CD4-positive, alpha-beta memory T cell (primary cell): ENCODE measurements at regions of chr17 and their contacts with region 1.

Region 1: GRCh38 chr17:80761110-80761871 is 216.7 kb downstream of the RPTOR start:
- DNase-seq: peak; percentile 45 to 87 (median 53)
- H3K4me3 ChIP-seq: peak overlapping the region in 1 of 2 donors; percentile 27
- H3K4me3 Mint-ChIP-seq: peak overlapping the region; percentile 73 to 87 (median 80)
- H3K27ac ChIP-seq: peak overlapping the region; percentile 49
- H3K27ac Mint-ChIP-seq: peak overlapping the region; percentile 89 to 96 (median 94)
- H3K4me1 ChIP-seq: peaks cover 72% of the 10 kb centered on the region
- H3K4me1 Mint-ChIP-seq: peaks cover 59 to 86% (median 73%) of the 10 kb centered on the region in 4 donors
- H3K27me3 ChIP-seq: no peaks in the 10 kb centered on the region
- H3K27me3 Mint-ChIP-seq: no peaks in the 10 kb centered on the region

Region 2: DNA sequence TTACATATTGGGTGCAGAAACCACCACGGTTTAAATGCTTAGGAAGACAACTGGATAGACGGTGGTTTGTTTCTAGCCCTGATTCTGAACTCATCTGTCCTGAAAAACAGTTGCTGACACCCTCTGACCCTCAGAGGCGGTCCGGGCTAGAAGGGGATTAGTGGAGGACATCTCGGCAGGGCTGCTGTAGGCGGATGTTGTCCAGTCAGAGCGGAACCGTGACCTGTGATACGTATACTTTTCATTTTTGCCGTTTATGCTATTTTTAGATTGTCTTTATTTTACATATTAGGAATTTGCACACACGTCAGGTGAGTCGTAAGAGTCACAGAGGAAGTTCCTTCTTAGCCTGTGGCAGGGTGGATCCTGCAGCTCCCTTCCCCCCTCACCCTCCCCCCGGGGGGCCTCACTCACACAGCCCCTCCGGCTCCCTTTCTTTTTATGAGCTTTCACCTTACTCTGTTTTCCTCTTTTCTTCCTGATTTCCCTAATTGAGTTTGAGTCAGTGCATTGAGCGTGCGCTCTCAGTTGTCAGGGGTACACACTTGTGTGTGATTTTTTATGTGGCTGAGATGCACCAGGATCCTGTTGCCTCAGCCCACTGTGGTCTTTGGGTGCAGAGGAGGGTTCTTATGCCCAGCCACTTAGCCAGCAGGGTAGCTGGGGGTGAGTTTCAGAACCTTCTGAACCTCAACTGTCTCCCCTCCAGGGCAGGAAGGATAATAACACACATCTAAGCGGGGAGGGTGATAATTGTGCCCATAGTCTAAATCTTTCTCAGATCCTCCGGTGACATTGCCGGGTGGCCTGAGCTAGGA is 19.3 kb after region 1 on chr17:
- CTCF ChIA-PET with region 1: interaction called, 5 read pairs
- POLR2A ChIA-PET with region 1: interaction called, 43 read pairs
- intact Hi-C with region 1: loop called (anchors 1 kb)
- DNase-seq: no peak
- H3K4me3 ChIP-seq: peak overlapping the region in 1 of 2 donors; percentile 23
- H3K4me3 Mint-ChIP-seq: peak overlapping the region; percentile 37 to 91 (median 66)
- H3K27ac ChIP-seq: peak overlapping the region; percentile 42
- H3K27ac Mint-ChIP-seq: peak overlapping the region; percentile 70 to 93 (median 78)
- H3K4me1 ChIP-seq: peaks cover 58% of the 10 kb centered on the region
- H3K4me1 Mint-ChIP-seq: peaks cover 37 to 81% (median 67%) of the 10 kb centered on the region in 4 donors
- H3K27me3 ChIP-seq: no peaks in the 10 kb centered on the region
- H3K27me3 Mint-ChIP-seq: no peaks in the 10 kb centered on the region

Region 3: GRCh38 chr17:81176665-81177064 is 415.4 kb after region 1 on chr17:
- CTCF ChIA-PET with region 1: no interaction called
- POLR2A ChIA-PET with region 1: no interaction called
- intact Hi-C with region 1: no loop called
- DNase-seq: no peak
- H3K4me3 ChIP-seq: no peak overlapping the region
- H3K4me3 Mint-ChIP-seq: no peak overlapping the region
- H3K27ac ChIP-seq: no peak overlapping the region
- H3K27ac Mint-ChIP-seq: no peak overlapping the region
- H3K4me1 ChIP-seq: no peaks in the 10 kb centered on the region
- H3K4me1 Mint-ChIP-seq: no peaks in the 10 kb centered on the region
- H3K27me3 ChIP-seq: no peaks in the 10 kb centered on the region
- H3K27me3 Mint-ChIP-seq: no peaks in the 10 kb centered on the region

Region 4: DNA sequence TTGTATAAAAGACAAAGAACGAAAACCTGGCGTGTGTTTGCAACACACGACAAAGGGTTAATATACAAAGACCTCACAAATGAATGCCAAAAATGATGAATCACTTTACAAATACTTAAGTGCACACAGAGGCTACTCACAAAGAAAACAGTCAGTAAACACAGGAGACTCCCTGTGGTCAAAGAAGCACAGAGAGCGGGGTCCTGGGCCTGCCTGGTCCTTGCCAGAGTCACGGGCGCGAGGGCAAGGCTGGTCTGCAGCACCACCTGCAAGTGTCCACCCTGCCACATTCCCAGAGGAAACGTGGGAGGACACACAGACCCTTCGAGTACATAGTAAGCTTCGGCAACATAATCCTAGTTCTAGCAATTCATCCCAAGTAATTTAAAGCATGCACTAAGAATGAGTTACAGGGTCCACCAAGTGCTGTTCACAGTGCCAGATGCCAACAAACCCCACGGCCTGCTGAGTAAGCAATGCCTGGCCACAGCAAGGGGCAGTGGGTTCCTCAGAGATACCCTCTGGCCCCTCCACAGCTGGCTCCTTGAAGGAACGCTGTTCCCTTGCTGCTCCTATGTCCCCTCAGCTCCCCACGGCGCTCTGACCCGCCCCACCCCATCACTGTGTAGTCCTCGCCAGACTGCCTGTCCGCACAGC is 815.5 kb after region 1 on chr17:
- CTCF ChIA-PET with region 1: no interaction called
- POLR2A ChIA-PET with region 1: no interaction called
- intact Hi-C with region 1: no loop called
- DNase-seq: no peak
- H3K4me3 ChIP-seq: no peak overlapping the region
- H3K4me3 Mint-ChIP-seq: no peak overlapping the region
- H3K27ac ChIP-seq: no peak overlapping the region
- H3K27ac Mint-ChIP-seq: no peak overlapping the region
- H3K4me1 ChIP-seq: no peaks in the 10 kb centered on the region
- H3K4me1 Mint-ChIP-seq: peaks cover 5 to 15% (median 12%) of the 10 kb centered on the region in 4 donors
- H3K27me3 ChIP-seq: no peaks in the 10 kb centered on the region
- H3K27me3 Mint-ChIP-seq: no peaks in the 10 kb centered on the region